Activated T-helper 1 cell treated with anti-CD3 and anti-CD28 coated beads, Interleukin-12 subunit alpha, Interleukin-12 subunit beta, Interleukin-2, Interleukin-4 antibody, amounts not matched to agents 30 ng/mL and 10 ng/mL and 1 ng/mL, durations not matched to agents 14 hours and 24 hours and 36 hours (primary cell): ENCODE measurements at regions of chr16 and their contacts with region 1.

Region 1: DNA sequence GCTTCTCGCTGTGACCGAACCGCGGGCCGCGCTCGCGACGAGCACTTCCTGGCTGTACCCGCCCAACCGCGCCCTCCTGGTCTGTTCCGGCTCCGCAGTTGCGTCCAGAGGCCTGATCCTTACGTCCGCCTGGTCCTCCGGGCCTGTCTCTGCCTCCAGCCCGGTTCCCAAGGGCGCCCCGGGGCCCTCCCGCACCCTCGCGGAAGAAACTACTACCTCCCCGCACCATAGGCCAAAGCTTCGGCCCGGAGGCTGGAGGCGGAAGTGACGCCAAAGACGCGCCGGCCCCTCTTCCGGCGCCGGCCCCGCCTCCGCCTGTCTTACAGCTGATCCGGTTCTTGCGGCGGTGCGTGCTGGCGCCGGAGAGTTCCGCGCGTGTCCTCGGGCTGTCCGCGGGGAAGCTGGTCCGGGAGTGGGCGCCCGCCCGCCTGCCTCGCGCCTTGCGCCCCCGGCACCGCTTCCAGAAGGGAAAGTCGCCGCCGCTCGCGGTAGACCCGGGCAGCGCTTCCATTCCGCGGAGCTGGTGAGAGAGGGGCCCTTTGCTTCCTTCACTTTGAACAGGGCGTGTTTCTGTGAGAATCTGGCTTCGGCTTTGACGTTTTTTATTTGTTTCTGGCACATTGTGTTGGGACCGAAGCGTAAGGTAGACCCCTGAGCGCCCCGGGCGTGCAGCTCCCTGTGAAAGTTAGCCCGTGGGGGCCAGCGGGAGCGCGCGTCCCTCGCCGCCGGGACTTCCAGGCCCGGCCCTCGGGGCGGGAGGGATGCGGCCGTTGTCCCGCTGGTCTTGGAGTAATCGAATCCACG is at the start of gene ZNF778:
- DNase-seq: peak; percentile 84
- H3K4me3 Mint-ChIP-seq: peak within 1 kb of the TSS; percentile 63
- H3K27ac Mint-ChIP-seq: peak within 1 kb of the TSS; percentile 37
- H3K4me1 Mint-ChIP-seq: peaks cover 12% of the 10 kb centered on the region
- H3K27me3 Mint-ChIP-seq: no peaks in the 10 kb centered on the region
- total RNA-seq, gene ZNF778: 8.1 and 9.5 TPM in 2 replicates

Region 2: DNA sequence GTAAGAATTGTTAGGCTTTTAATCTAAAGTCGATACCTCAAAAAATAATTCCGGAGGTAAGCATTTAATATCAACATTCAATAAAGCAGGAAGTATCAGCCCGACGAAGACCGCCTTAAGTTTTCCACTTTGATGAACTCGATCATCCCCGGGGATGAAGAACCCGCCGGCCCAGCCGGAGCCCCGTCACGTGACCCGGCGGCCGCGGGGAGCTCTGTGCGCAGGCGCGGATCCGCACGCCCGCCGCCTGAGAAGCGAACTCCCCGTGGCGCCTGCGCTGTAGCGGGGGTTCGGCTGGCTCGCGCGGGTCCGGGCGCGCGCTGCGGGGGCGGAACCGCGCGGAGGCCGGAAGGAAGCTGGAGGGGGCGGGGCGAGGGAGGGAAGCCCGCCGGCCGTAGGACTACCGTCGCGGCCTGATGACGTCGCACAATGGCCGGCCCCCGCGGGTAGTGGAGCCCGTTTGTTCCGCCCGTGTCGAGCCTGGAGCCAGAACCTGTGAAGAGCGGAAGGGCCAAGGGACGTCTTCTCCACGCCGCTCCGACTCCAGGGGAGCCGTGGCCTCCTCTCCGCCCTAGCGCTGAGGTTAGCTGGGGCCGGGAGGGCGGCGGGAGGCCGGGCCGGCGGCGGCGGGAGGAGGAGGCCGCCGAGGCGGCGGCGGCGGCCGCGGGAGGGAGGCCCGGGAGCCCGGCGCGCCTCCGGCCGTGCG is 647.5 kb before region 1 on chr16 and contains the start of gene ZC3H18:
- intact Hi-C with region 1: loop called (anchors 2 kb)
- DNase-seq: peak; percentile 96
- H3K4me3 Mint-ChIP-seq: peak within 1 kb of the TSS; percentile 92
- H3K27ac Mint-ChIP-seq: peak within 1 kb of the TSS; percentile 86
- H3K4me1 Mint-ChIP-seq: peaks cover 40% of the 10 kb centered on the region
- H3K27me3 Mint-ChIP-seq: no peaks in the 10 kb centered on the region
- total RNA-seq, gene ZC3H18: 115 and 116 TPM in 2 replicates

Region 3: GRCh38 chr16:88700636-88701482 is 516.7 kb before region 1 on chr16:
- intact Hi-C with region 1: no loop called
- DNase-seq: peak; percentile 92
- H3K4me3 Mint-ChIP-seq: peak overlapping the region; percentile 89
- H3K27ac Mint-ChIP-seq: peak overlapping the region; percentile 94
- H3K4me1 Mint-ChIP-seq: peaks cover 57% of the 10 kb centered on the region
- H3K27me3 Mint-ChIP-seq: no peaks in the 10 kb centered on the region

Region 4: DNA sequence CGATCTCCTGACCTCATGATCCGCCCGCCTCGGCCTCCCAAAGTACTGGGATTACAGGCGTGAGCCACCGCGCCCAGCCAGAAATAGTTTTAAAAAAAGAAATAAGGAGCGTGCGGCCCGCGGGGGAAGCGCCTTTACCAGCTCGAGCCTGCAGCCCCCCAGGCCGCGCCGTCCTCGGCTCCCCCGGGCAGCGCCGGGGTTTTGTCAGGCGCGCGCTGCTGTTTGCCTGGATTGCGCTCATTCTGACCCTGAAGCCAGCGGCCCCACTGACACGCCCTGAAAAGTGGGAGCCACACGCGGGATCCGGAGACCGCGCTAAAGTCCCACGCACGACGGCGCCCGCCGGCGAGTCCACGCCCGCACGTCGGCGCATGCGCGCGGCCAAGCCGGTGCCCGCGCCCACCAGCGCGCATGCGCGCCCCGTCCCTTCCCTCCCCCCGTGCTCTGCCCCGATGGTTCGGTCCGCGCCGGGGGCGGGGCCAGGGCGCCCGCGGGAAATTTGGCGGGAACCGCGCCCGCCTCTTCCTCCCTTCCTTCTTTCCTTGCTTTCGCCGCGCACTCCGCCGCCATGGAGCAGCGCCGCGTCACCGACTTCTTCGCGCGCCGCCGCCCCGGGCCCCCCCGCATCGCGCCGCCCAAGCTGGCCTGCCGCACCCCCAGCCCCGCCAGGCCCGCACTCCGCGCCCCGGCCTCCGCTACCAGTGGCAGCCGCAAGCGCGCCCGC is 414.2 kb before region 1 on chr16 and contains the start of gene CDT1:
- intact Hi-C with region 1: loop called (anchors 2 kb)
- DNase-seq: peak; percentile 84
- H3K4me3 Mint-ChIP-seq: peak within 1 kb of the TSS; percentile 85
- H3K27ac Mint-ChIP-seq: peak within 1 kb of the TSS; percentile 84
- H3K4me1 Mint-ChIP-seq: peaks cover 15% of the 10 kb centered on the region
- H3K27me3 Mint-ChIP-seq: no peaks in the 10 kb centered on the region
- total RNA-seq, gene CDT1: 95.4 and 97.3 TPM in 2 replicates

Region 5: DNA sequence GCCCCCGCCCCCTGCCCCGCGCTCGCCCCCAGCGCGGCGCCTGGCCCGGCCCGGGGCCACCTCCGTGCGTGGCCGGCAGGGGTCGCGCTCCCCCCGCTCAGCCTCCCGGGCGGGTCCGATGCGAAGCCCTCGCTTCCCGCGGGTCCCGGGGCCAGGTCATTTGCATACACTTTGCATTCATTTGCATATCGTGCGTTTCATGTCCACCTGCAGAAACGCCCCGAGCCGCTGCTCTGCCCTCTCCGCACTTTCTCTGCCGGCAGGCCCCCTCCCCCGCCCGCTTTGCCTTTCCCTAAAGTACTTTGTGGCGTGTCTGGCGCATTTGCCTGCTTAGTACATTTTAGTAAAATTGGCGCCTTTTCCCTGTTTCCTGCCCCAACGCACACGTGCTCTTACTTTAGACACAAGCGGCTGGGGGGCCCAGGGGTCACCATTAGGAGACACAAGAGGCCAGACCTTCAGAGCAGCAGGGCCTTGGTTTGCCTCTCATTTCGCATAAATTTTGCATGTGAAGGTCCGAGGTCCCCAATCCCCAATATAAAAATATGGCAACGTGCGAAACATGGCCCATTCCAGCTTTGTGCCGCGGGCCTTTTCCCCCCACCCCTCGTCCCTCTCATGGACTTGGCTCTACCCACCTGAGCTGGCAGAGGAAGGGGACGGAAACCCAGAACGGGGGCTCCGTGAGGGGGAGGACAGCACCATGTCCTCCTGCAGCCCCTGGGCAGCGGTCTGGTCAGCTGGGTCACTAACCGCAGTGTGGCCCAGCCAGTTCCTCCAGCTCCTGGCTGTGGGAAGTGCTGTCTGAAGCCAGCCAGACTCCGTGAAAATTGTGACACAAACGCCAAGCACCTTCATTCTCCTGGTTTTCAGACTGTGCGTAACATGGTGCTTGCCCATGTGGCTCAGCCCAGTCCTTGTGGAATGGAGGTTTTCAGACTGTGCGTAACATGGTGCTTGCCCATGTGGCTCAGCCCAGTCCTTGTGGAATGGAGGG is 275.4 kb before region 1 on chr16:
- intact Hi-C with region 1: loop called (anchors 5 kb)
- DNase-seq: peak; percentile 36
- H3K4me3 Mint-ChIP-seq: peak overlapping the region; percentile 26
- H3K27ac Mint-ChIP-seq: no peak overlapping the region
- H3K4me1 Mint-ChIP-seq: no peaks in the 10 kb centered on the region
- H3K27me3 Mint-ChIP-seq: peaks cover 31% of the 10 kb centered on the region

Region 6: DNA sequence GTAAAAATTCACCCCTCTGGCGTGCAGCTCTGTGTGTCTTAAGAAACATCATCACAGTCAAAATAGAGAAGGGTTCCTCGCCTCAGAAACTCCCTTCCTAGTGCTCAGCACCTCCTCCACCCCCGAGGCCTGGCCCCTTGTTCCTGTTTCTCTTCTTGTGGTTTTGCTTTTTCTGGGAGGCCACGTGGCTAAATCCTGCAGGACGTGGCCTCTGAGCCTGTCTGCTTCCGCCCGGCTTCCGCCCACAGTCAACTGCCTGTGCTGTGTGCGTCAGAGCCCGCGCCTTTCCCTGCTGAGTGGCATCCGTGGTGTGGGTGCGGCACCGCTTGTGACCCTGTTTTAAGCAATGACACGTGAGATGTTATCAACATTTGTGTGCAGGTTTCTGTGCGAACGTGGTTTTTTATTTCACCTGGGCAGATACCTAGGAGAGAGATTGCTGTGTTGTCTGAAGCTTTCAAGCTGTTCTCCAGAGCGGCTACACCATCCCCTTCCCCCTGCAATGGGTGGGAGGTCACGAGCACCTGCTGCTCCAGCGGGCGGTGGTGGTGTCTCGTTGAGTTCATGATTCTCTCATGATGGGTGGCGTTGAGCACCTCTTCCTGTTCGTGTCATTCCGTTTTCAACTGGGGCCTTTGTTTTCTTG is 102.3 kb before region 1 on chr16:
- intact Hi-C with region 1: loop called (anchors 1 kb)
- DNase-seq: peak; percentile 83
- H3K4me3 Mint-ChIP-seq: peak overlapping the region; percentile 79
- H3K27ac Mint-ChIP-seq: peak overlapping the region; percentile 90
- H3K4me1 Mint-ChIP-seq: peaks cover 29% of the 10 kb centered on the region
- H3K27me3 Mint-ChIP-seq: no peaks in the 10 kb centered on the region

Region 7: DNA sequence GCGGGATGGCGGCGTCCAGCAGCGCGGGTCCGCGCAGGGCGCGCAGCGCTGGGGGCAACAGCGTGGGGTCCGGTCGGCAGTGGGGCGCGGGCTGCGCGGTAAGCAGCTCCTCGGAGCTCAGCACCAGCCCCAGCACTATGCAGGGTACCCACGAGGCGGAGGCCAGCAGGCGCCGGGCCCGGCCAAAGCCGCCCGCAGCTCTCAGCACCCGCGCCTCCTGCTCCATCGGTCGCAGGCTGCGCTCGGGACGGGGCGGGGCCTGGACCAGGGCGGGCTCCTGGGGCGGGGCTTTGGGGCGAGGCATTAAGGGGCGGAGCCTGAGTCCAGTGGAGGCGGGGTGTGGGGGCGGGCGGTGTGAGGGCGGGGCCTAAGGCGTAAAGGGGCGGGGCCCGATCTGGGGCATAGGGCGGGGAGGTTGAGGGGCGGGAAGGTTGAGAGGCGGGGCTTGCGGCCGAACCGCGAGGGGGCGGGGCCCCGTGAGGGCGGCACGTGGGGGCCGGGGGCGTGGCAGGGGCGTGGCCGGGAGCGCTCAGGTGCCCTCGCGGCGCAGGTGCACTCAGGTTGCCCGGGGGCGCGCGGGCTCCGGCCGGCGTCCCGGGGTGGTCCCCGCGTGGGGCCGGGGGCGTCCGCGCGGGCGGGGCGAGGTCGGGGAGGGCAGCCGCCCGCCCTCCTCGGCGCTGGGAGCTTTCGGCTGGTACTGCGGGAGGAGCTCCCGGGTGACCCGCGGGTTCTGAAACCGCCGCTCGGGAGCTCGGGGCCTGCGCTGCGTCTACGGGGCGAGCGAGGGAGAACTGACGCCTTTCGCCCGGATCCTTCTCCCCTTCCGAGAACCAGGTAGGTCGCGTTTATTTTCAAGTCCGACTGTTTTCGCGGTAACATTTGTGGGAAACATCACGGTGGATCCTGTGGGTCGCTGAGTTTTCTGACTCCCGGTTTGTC is 15.9 kb before region 1 on chr16:
- intact Hi-C with region 1: loop called (anchors 2 kb)
- DNase-seq: peak; percentile 74
- H3K4me3 Mint-ChIP-seq: peak overlapping the region; percentile 59
- H3K27ac Mint-ChIP-seq: no peak overlapping the region
- H3K4me1 Mint-ChIP-seq: no peaks in the 10 kb centered on the region
- H3K27me3 Mint-ChIP-seq: peaks cover 40% of the 10 kb centered on the region